ENCODE measurements at regions of chr15 and their contacts with region 1.

Region 1: GRCh38 chr15:40238532-40239403 is at the start of gene PAK6:
- DNase-seq: peak; percentile 95
- H3K4me3 ChIP-seq: peak within 1 kb of the TSS; percentile 23 to 73 (median 61)
- H3K27ac ChIP-seq: peak within 1 kb of the TSS; percentile 75
- H3K4me1 ChIP-seq: peaks cover 73% of the 10 kb centered on the region
- H3K27me3 ChIP-seq: no peaks in the 10 kb centered on the region
- CTCF ChIP-seq: no peak
- total RNA-seq, gene PAK6: 13.7 to 33.8 TPM

Region 2: GRCh38 chr15:40266828-40267304 is 28.1 kb after region 1 on chr15:
- CTCF ChIA-PET with region 1: no interaction called
- dilution Hi-C with region 1: no loop called
- in situ Hi-C with region 1: no loop called
- intact Hi-C with region 1: loop called (anchors 2 kb)
- DNase-seq: peak; percentile 96
- H3K4me3 ChIP-seq: no peak overlapping the region
- H3K27ac ChIP-seq: no peak overlapping the region
- H3K4me1 ChIP-seq: peaks cover 11% of the 10 kb centered on the region
- H3K27me3 ChIP-seq: no peaks in the 10 kb centered on the region
- CTCF ChIP-seq: no peak